Psoas muscle (tissue), 8 donors: ENCODE measurements at regions of chr4 and their contacts with region 1.

Region 1: DNA sequence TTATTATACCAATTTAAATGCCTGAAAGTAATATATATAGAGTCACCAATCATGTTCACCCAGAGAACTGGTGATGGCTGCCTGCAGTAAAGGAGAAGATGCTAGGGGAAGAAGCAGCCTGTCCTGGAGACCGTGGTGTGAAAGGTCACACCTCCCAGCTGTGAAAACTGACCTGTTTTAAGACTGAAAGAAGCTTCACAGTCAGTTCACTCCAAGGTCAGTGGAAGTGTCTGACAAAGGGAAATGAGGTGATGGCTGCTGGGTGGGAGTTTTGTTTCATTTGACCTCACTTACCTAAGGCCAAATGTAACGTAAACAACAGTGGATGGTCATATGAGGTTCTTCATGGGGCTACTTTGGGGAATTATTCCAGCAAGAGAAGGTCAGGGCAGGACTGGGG is 352.1 kb upstream of the GATB start:
- DNase-seq: no peak
- ATAC-seq: no peak
- H3K4me3 ChIP-seq: no peak overlapping the region
- H3K27ac ChIP-seq: no peak overlapping the region
- H3K4me1 ChIP-seq: peaks cover 15% of the 10 kb centered on the region
- H3K27me3 ChIP-seq: no peaks in the 10 kb centered on the region
- CTCF ChIP-seq: no peak

Region 2: DNA sequence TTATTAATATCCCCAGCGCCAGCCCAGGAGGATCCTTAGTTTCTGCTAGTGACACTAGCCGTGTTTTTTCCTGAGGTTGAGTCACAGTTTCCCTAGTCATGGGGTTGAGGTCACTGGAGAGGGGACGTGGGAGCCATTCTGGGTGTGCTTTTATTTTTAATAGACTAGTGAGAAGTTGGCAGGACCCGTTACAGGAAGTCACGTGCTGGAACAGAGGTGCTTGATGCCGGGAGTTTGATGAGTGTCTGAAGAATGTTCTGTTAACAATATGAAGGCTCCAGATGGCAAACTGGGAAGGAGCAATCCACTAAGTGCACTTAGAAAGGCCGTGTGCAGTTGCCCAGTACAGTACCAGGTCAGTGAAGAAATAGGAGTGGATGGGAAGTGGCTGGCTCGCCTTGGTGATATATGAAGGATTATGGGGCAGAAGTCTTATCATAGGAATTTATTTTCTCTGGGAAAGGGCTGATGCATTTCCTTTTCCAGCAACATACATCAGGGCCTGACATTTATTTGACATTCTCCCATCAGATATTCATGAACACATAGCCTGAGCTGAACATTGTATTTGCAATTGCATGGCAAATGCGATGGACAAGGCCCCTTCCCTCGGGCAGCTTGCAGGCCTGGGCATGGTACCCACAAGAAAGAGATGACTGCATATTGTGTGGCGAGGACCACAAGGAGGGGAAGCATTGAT is 131.2 kb after region 1 on chr4:
- intact Hi-C with region 1: loop called in 1 of 2 experiments (anchors 10 kb)
- DNase-seq: no peak
- ATAC-seq: peak in 3 of 4 donors; percentile 43 to 64 (median 48)
- H3K4me3 ChIP-seq: no peak overlapping the region
- H3K27ac ChIP-seq: peak overlapping the region; percentile 40
- H3K4me1 ChIP-seq: no peaks in the 10 kb centered on the region
- H3K27me3 ChIP-seq: no peaks in the 10 kb centered on the region
- CTCF ChIP-seq: no peak

Region 3: DNA sequence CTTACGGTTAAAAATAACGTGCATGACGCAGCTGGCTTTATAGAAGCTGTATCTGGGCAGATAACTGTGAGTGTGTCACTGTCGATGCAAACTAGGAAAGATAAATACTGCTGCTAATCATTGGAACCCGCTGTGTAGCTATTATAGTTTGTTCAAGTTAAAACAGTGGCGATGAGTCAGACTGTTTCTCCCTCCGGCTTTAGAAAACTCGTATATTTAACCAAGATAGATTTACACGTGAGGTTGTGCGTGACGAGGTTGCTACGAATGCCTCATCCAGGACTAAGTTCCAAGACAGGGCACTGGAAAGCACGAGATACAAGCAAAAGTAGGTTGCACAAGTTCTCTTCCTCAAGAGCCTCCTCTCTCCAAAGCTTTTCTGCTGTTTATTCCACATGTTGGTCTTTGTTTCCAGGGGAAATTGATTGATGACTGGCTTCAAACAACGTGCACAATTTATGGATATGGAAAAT is 152.3 kb after region 1 on chr4:
- intact Hi-C with region 1: no loop called
- DNase-seq: no peak
- ATAC-seq: peak in 2 of 4 donors; percentile 32 to 54
- H3K4me3 ChIP-seq: no peak overlapping the region
- H3K27ac ChIP-seq: no peak overlapping the region
- H3K4me1 ChIP-seq: no peaks in the 10 kb centered on the region
- H3K27me3 ChIP-seq: no peaks in the 10 kb centered on the region
- CTCF ChIP-seq: no peak